Cardiac septum (tissue), 1 donor: ENCODE measurements at regions of chr4 and their contacts with region 1.

Region 1: DNA sequence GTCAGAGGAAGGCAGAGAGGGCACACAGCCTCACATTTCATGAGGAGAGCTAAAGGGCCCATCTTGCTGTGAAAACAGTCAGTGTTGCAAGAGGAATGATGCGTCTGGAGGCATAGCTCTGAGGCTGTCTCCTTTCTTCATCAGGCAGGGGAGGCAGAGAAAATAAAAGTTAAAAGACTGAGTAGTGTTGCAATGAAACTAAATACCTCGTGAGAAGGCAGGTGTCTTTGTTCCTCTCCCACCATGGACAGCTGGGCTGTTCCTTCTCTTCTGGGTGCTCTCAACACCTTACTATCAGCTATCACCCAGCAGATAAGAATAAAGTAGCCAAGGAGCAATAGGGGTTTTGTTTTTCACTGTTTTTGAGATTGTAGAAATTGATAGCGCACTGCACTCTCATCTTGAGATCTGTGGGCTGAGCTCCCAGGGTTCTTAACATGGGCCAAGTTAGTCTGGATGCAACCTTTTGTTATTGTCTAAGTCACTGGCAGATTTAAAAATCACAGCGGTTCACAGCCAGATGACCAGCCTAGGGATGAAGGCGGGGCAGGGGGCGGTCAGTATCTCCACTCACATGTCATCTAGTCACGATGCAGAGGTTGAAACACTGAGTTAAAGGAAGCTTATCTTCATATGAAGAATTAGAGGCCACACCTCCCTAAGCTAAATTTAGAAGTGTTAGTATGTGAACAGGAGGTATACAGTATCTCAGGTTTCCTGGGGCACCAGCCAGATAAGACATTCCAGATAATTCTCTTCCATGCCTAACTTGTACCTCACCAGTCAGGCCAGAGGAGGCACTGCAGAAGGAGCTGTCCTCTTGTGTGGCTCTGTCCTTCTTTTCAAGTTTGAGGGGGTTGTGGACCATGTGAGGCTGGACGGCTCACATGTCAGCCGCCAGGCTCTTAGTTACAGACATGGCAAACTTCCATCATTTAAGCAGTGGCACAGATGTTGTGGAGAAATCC is 36.9 kb downstream of the PARM1 start:
- DNase-seq: no peak

Region 2: DNA sequence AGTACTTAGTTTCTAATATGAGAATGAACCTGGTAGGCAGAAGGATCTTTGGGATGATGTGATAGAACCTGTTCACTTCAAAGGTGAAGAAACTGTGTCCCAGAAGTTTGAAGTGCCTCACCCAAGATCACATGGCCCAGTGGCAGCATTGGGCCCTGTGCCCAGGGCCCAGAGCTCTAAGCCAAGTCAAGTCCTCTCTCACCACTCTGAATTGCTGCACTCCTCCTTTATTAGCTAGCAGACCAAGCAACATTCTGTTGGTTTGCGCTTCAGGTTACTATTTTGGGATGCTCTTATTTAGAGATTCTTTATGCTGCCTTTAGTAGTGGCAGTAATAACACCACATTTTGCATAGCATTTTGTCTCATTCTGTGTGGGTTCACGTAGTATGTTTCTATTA is 45.8 kb after region 1 on chr4:
- intact Hi-C with region 1: loop called (anchors 5 kb)
- DNase-seq: no peak

Region 3: GRCh38 chr4:75099321-75099720 is 129.5 kb after region 1 on chr4:
- intact Hi-C with region 1: no loop called
- DNase-seq: no peak